ENCODE measurements at regions of chr2 and their contacts with region 1.

Region 1: GRCh38 chr2:68467077-68467960 is at the starts of genes APLF and FBXO48:
- DNase-seq: peak; percentile 99
- H3K4me3 ChIP-seq: peak within 1 kb of the TSS; percentile 77 to 91 (median 86)
- H3K27ac ChIP-seq: peak within 1 kb of the TSS; percentile 80 to 91 (median 86)
- H3K4me1 ChIP-seq: peaks cover 12 to 26% (median 22%) of the 10 kb centered on the region in 4 donors
- H3K27me3 ChIP-seq: no peaks in the 10 kb centered on the region
- CTCF ChIP-seq: no peak
- EP300 ChIP-seq: no peak
- POLR2A ChIP-seq: peak; percentile 10
- total RNA-seq, gene APLF: 7.6 to 12.1 (median 10.9) TPM
- total RNA-seq, gene FBXO48: 0.33 to 0.83 (median 0.59) TPM

Region 2: GRCh38 chr2:68272246-68272994 is 194.9 kb before region 1 on chr2:
- intact Hi-C with region 1: no loop called
- DNase-seq: no peak
- H3K4me3 ChIP-seq: no peak overlapping the region
- H3K27ac ChIP-seq: no peak overlapping the region
- H3K4me1 ChIP-seq: peaks cover 0 to 15% (median 4%) of the 10 kb centered on the region in 4 donors
- H3K27me3 ChIP-seq: no peaks in the 10 kb centered on the region
- CTCF ChIP-seq: no peak
- EP300 ChIP-seq: no peak
- POLR2A ChIP-seq: no peak

Region 3: GRCh38 chr2:68715353-68716041 is 248.2 kb after region 1 on chr2:
- intact Hi-C with region 1: loop called (anchors 2 kb)
- DNase-seq: peak; percentile 85
- H3K4me3 ChIP-seq: no peak overlapping the region
- H3K27ac ChIP-seq: no peak overlapping the region
- H3K4me1 ChIP-seq: peaks cover 0 to 4% (median 0%) of the 10 kb centered on the region in 4 donors
- H3K27me3 ChIP-seq: peaks cover 0 to 12% (median 0%) of the 10 kb centered on the region in 4 donors
- CTCF ChIP-seq: peak; percentile 46 to 74 (median 55)
- EP300 ChIP-seq: no peak
- POLR2A ChIP-seq: no peak

Region 4: GRCh38 chr2:68832233-68832869 is 365.0 kb after region 1 on chr2:
- intact Hi-C with region 1: loop called (anchors 5 kb)
- DNase-seq: peak; percentile 92
- H3K4me3 ChIP-seq: no peak overlapping the region
- H3K27ac ChIP-seq: peak overlapping the region; percentile 79 to 83 (median 80)
- H3K4me1 ChIP-seq: peaks cover 45 to 53% (median 49%) of the 10 kb centered on the region in 4 donors
- H3K27me3 ChIP-seq: no peaks in the 10 kb centered on the region
- CTCF ChIP-seq: no peak
- EP300 ChIP-seq: no peak
- POLR2A ChIP-seq: no peak

Region 5: DNA sequence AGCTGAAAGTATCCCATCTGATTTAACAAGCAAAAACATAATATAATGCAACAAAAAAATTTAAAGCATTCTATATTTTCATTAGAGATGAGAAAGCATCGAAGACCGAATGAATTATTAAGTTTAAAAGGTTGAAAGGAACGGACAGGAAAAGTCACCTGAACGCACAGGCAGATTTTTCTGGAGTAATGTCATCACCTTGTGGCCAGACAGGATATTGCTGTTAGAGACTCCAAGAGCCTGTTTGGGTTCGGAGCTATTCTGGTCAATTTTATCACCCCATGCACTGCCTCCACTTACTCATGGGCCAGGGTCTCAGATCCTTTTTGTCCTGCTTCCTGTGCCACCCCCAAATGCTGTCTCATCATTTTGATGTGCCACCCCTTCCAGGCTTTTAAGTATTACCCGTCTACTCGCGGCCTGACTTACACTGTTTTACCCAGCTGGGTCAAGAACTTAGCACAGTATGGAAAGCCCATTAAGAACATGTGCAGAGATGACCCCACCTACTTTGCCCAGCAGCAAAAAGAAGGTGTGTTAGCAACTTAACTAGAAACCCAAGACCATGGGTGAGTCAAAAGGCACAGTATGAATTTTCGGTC is 458.1 kb after region 1 on chr2:
- intact Hi-C with region 1: loop called (anchors 5 kb)
- DNase-seq: no peak
- H3K4me3 ChIP-seq: no peak overlapping the region
- H3K27ac ChIP-seq: no peak overlapping the region
- H3K4me1 ChIP-seq: no peaks in the 10 kb centered on the region
- H3K27me3 ChIP-seq: no peaks in the 10 kb centered on the region
- CTCF ChIP-seq: peak; percentile 77 to 89 (median 84)
- EP300 ChIP-seq: no peak
- POLR2A ChIP-seq: no peak